ENCODE measurements at regions of chr10 and their contacts with region 1.

Region 1: GRCh38 chr10:77846718-77847630 is 79.6 kb downstream of the DLG5 start:
- DNase-seq: peak; percentile 65 to 85 (median 74)
- ATAC-seq: peak; percentile 39 to 84 (median 78)
- H3K4me3 ChIP-seq: peak overlapping the region in 2 of 12 donors; percentile 2 to 5
- H3K27ac ChIP-seq: peak overlapping the region in 8 of 12 donors; percentile 3 to 83 (median 30)
- H3K4me1 ChIP-seq: peaks cover 0 to 16% (median 8%) of the 10 kb centered on the region in 12 donors
- H3K27me3 ChIP-seq: no peaks in the 10 kb centered on the region
- CTCF ChIP-seq: peak; percentile 92 to 98 (median 96)
- POLR2A ChIP-seq: no peak

Region 2: GRCh38 chr10:77926566-77927401 is 79.8 kb after region 1 on chr10 and contains the start of gene DLG5:
- intact Hi-C with region 1: loop called in 5 of 10 experiments (anchors 1 to 5 kb)
- DNase-seq: peak; percentile 66 to 85 (median 71)
- ATAC-seq: peak; percentile 69 to 89 (median 84)
- H3K4me3 ChIP-seq: peak within 1 kb of the TSS; percentile 55 to 98 (median 68)
- H3K27ac ChIP-seq: peak within 1 kb of the TSS in 11 of 12 donors; percentile 17 to 89 (median 59)
- H3K4me1 ChIP-seq: peaks cover 0 to 33% (median 23%) of the 10 kb centered on the region in 12 donors
- H3K27me3 ChIP-seq: peaks cover 0 to 23% (median 0%) of the 10 kb centered on the region in 9 donors
- CTCF ChIP-seq: peak in 1 of 12 donors; percentile 7
- POLR2A ChIP-seq: peak in 1 of 2 donors; percentile 13
- total RNA-seq, gene DLG5: 7.6 to 27.1 (median 13.6) TPM

Region 3: DNA sequence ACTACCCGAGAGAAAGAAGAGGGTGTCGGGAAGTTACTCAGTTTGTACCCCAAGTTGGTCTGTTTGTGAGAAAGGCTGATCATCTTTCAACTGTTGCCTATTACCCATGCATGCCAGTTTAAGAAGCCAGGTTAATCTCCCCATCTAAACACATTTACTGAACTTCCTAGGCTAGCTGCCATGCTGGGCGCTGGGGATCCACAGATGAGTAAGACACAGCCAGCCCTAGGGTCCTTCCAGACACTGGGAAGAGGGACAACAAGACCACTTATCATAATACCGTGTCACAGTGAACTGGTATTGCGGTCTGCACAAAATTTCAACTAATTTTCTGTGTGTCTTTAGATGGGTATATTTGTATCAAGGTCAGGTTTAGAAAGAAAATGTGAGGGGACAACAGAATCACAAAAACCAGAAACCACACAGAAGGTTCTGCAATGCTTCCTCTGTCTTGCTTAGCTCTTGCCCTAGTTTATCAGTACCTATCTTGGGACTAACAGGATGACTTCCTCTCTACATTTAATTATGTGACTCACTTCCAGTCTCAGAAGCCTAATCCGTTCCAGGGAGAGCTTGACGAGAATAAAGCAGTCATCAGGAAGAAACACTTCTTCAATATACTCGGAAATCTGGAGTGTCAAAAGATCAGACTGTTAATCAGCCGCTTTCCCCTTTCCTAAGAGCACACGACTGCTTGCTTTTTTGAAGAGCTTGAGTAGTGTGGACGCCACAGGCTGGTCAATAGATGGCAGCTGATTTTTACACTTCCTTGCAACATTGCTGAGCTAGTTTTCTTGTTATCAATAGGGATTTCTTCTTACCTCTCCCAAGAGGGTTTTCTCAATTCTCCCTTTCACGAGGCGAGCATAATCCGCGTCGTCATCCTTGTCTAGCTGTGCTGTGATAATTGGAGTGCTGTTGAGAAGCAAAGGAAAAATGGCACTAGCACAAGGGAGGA is 136.7 kb after region 1 on chr10:
- intact Hi-C with region 1: loop called in 8 of 10 experiments (anchors 5 to 10 kb)
- DNase-seq: no peak
- ATAC-seq: peak in 3 of 4 donors; percentile 59 to 82 (median 67)
- H3K4me3 ChIP-seq: no peak overlapping the region
- H3K27ac ChIP-seq: peak overlapping the region in 3 of 12 donors; percentile 12 to 52 (median 46)
- H3K4me1 ChIP-seq: peaks cover 0 to 17% (median 7%) of the 10 kb centered on the region in 12 donors
- H3K27me3 ChIP-seq: no peaks in the 10 kb centered on the region
- CTCF ChIP-seq: no peak
- POLR2A ChIP-seq: no peak

Region 4: DNA sequence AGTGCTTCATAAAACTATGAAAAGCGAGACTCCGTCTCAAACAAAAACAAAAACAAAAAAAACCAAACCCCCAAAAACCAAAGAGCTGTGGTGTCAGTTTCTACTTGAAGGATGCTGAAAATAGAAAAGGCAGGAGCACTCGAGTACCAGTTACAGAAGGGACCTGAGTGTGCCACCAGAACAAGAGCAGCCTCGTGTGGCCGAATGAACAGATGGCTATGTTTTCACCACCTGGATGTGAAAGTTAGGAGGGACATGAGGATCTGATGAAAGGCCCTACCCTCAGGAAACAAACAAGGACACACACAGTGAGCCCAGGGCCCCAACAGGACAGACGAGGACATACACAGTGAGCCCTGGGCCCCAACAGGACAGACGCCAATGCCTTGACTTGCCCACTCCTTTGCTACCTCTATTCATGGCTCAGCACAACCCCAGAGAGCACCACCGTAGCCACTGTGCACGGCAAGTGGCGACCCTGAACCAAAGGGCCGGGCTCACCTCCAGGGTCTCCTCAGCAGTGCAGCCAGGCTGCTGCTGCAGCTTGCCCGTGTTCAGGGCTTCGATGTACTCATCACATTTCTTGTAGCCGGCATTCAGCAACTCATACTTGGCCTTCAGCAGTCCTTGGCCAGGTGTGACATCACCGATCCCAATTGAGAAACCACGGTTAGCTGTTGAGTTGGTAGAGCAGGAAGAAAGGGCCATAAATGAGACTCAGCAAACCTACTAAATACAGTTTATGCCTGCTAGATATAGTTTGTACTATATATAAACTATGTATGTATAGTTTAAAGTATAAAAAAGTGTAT is 157.4 kb after region 1 on chr10:
- intact Hi-C with region 1: loop called in 3 of 10 experiments (anchors 5 to 10 kb)
- DNase-seq: no peak
- ATAC-seq: peak in 3 of 4 donors; percentile 55 to 73 (median 69)
- H3K4me3 ChIP-seq: no peak overlapping the region
- H3K27ac ChIP-seq: peak overlapping the region in 1 of 12 donors; percentile 12
- H3K4me1 ChIP-seq: peaks cover 0 to 7% (median 0%) of the 10 kb centered on the region in 12 donors
- H3K27me3 ChIP-seq: no peaks in the 10 kb centered on the region
- CTCF ChIP-seq: peak in 7 of 12 donors; percentile 8 to 48 (median 27)
- POLR2A ChIP-seq: no peak

Region 5: GRCh38 chr10:78301891-78302738 is 455.1 kb after region 1 on chr10:
- intact Hi-C with region 1: no loop called
- DNase-seq: peak in 1 of 5 donors; percentile 5
- ATAC-seq: no peak
- H3K4me3 ChIP-seq: peak overlapping the region in 9 of 12 donors; percentile 42 to 68 (median 62)
- H3K27ac ChIP-seq: peak overlapping the region; percentile 83 to 92 (median 87)
- H3K4me1 ChIP-seq: peaks cover 0 to 20% (median 11%) of the 10 kb centered on the region in 12 donors
- H3K27me3 ChIP-seq: no peaks in the 10 kb centered on the region
- CTCF ChIP-seq: peak in 4 of 12 donors; percentile 8 to 35 (median 20)
- POLR2A ChIP-seq: no peak